ENCODE measurements at regions of chr6 and their contacts with region 1.

Region 1: DNA sequence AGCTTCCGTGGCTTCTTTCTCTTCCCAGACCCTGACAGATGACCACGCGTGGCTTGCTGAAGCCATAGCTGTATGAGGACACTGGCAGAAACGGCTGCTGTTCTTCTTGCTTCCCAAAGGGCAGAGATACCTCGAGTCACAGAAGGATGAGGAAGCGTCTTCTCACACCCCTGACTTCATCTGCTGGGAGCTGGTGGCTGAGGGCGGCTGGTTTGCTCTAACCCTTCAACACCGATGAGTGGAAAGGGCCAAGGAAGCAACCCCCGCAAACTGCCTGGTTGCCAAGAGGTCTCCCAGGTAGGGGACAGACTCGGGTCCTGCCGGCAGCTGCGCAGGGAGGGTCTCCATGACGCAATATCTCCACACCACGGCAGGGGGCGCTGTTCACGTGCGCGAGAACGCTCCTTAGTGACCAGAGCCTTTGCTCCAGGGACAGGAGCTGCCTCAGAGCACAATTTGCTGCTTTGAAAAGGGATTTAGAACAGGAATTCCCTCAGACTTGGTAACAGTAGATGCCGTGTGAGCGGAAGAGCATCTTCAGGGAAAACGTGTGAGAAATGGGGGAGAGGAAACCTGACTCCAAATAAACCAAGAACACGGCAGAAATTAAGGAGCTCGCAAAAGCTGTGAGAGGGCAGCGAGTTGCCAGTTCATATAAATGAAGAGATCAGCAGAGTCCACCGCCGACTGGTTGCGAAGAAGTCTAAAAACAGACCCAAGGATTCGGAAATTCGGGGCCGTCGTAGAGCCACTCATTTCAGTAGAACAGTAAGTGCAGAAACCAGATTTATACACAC is 80.2 kb downstream of the ERMARD start:
- DNase-seq: peak; percentile 18
- H3K4me3 ChIP-seq: no peak overlapping the region
- CTCF ChIP-seq: peak; percentile 86

Region 2: GRCh38 chr6:169898797-169899480 is 67.3 kb after region 1 on chr6:
- in situ Hi-C with region 1: loop called (anchors 10 kb)
- DNase-seq: no peak
- H3K4me3 ChIP-seq: no peak overlapping the region
- CTCF ChIP-seq: no peak

Region 3: GRCh38 chr6:170129691-170130171 is 298.1 kb after region 1 on chr6:
- in situ Hi-C with region 1: loop called (anchors 25 kb)
- DNase-seq: no peak
- H3K4me3 ChIP-seq: no peak overlapping the region
- CTCF ChIP-seq: no peak

Region 4: GRCh38 chr6:170505306-170505705 is 673.7 kb after region 1 on chr6:
- in situ Hi-C with region 1: loop called (anchors 10 kb)
- DNase-seq: no peak
- H3K4me3 ChIP-seq: no peak overlapping the region
- CTCF ChIP-seq: no peak